ENCODE measurements at regions of chr11 and their contacts with region 1.

Region 1: GRCh38 chr11:132564091-132564885 is 968.0 kb downstream of the OPCML start:
- DNase-seq: no peak
- ATAC-seq: no peak
- H3K4me3 ChIP-seq: no peak overlapping the region
- H3K27ac ChIP-seq: no peak overlapping the region
- H3K4me1 ChIP-seq: no peaks in the 10 kb centered on the region
- H3K27me3 ChIP-seq: no peaks in the 10 kb centered on the region

Region 2: GRCh38 chr11:132578580-132578979 is 14.3 kb after region 1 on chr11:
- intact Hi-C with region 1: loop called in 1 of 2 experiments (anchors 1 kb)
- DNase-seq: no peak
- ATAC-seq: no peak
- H3K4me3 ChIP-seq: no peak overlapping the region
- H3K27ac ChIP-seq: no peak overlapping the region
- H3K4me1 ChIP-seq: no peaks in the 10 kb centered on the region
- H3K27me3 ChIP-seq: no peaks in the 10 kb centered on the region